ENCODE measurements at regions of chr2 and their contacts with region 1.

Region 1: DNA sequence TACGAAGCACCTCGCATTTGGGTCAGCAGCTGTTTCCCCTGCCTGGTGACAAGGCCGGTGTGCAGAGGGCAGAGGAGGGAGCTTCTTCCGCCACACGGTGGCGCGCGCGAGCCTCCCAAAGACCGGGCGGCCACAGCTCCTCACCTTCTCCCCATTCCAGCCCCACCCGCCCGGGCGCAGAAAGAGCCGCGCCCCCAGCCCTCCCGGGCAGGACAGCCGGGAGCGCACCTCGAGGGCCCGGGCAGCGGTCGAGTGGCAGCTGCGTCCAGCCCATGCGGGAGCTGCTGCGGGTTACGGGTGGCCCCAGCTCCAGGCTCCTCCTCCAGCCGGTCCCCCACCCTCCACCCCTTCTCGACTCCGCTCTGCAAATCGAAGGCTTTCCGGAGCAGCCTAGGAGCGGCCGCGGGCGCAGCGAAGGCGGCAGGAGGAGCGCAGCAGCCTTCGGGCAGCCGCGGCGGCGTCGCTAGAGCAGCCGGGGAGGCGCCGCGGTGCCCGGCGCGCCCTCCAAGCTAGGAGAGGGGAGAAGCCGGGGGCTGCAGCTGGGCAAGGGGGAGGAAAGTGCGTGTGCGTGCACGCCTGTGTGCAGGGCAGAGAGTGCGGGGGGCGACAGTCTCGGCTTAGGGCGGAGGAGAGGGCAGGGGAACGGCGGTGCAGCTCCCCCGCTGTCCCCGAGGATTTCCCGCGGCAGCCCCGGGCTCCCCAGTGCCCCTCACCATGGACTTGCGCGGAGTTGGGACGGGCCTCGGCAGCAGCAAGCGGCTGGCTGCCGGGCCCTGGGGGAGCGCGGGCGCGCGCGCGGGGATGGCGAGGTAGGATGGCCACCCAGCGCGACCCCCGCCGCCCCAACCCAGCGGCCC is at the start of gene CCDC85A:
- DNase-seq: peak; percentile 85 to 88
- ATAC-seq: peak; percentile 91 to 97 (median 94)
- H3K4me3 ChIP-seq: peak within 1 kb of the TSS; percentile 53 to 82 (median 65)
- H3K27ac ChIP-seq: peak within 1 kb of the TSS; percentile 56 to 92 (median 82)
- H3K4me1 ChIP-seq: peaks cover 0 to 52% (median 15%) of the 10 kb centered on the region in 9 donors
- H3K27me3 ChIP-seq: peaks cover 0 to 66% (median 12%) of the 10 kb centered on the region in 7 donors
- CTCF ChIP-seq: peak; percentile 92 to 98 (median 96)
- total RNA-seq, gene CCDC85A: 2.8 to 8.5 (median 3.6) TPM

Region 2: DNA sequence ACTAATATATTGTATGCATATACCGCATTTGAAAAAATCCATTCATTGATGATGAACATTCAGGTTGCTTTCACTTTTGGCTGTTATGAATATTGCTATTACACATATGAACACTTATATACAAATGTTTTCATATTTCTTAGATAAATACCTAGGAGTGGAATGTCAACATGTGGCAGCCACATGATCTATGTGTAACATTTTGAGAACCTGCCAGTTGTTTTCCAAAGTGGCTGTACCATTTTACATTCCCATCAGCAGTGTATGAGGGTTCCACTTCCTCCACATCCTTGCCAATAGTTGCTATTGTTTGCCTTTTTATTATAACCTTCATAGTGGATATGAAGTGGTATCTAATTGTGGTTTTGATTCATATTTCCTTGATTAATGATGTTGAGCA is 40.4 kb after region 1 on chr2:
- intact Hi-C with region 1: no loop called
- DNase-seq: no peak
- ATAC-seq: no peak
- H3K4me3 ChIP-seq: no peak overlapping the region
- H3K27ac ChIP-seq: no peak overlapping the region
- H3K4me1 ChIP-seq: no peaks in the 10 kb centered on the region
- H3K27me3 ChIP-seq: no peaks in the 10 kb centered on the region
- CTCF ChIP-seq: no peak

Region 3: DNA sequence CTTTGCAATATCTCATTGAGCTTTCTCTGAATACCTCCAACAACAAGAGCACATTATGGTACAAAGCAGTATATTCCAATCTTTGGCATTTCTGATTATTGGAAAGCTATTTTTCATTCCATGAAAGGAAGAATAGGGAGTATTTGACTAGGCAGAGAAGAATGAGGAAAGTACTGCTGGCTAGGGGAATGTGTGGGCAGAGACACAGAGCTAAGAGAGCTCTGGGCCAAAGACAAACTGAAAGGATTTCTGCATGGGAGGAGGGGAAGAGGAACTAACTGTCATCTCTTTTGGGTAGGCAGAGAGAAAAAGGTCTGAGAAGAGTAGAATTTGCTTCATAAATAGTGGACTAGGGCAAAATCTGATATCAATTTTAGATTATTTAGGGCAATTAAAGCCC is 150.8 kb after region 1 on chr2:
- intact Hi-C with region 1: loop called in 1 of 10 experiments (anchors 5 kb)
- DNase-seq: no peak
- ATAC-seq: peak in 5 of 8 donors; percentile 38 to 79 (median 52)
- H3K4me3 ChIP-seq: no peak overlapping the region
- H3K27ac ChIP-seq: peak overlapping the region in 7 of 10 donors; percentile 4 to 71 (median 46)
- H3K4me1 ChIP-seq: peaks cover 0 to 46% (median 25%) of the 10 kb centered on the region in 9 donors
- H3K27me3 ChIP-seq: no peaks in the 10 kb centered on the region
- CTCF ChIP-seq: no peak

Region 4: GRCh38 chr2:57497489-57498096 is 1313.7 kb after region 1 on chr2:
- intact Hi-C with region 1: loop called in 7 of 10 experiments (anchors 2 to 10 kb)
- DNase-seq: peak in 1 of 2 donors; percentile 10
- ATAC-seq: peak in 2 of 8 donors; percentile 29 to 61
- H3K4me3 ChIP-seq: no peak overlapping the region
- H3K27ac ChIP-seq: no peak overlapping the region
- H3K4me1 ChIP-seq: peaks cover 0 to 7% (median 0%) of the 10 kb centered on the region in 9 donors
- H3K27me3 ChIP-seq: no peaks in the 10 kb centered on the region
- CTCF ChIP-seq: peak; percentile 57 to 78 (median 73)

Region 5: DNA sequence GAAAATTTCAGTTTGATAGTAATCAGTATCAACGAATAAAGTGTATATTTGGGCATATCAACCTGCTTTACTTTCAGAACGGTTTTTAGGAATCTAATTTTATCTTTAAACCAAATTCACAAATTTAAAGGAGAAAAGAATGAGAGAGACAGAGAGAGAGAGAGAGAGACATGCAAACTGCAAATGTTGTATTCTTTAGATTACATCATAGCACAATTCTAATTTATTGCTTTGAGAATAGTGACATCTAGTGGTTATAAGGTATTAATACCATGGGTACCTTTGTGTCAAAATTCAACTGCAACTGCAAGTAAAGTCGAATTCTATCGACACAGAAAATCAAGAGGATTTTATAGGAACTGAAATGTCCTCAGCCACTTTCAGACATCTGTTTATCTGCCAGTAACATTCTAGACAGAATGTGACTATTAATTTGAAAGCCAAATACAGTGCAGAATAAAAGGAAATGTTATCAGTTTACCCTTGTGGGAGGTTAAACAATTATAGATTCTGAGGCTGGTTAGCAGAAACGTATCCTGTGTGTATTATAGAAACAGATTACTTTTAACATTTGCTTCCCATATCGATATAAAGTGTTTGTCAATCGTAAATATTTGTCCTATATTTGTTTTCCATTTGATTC is 1332.9 kb after region 1 on chr2:
- intact Hi-C with region 1: loop called in 6 of 10 experiments (anchors 2 to 5 kb)
- DNase-seq: no peak
- ATAC-seq: peak in 2 of 8 donors; percentile 50 to 55
- H3K4me3 ChIP-seq: no peak overlapping the region
- H3K27ac ChIP-seq: no peak overlapping the region
- H3K4me1 ChIP-seq: no peaks in the 10 kb centered on the region
- H3K27me3 ChIP-seq: no peaks in the 10 kb centered on the region
- CTCF ChIP-seq: peak; percentile 19 to 79 (median 63)